GM18951 (cell line): ENCODE measurements at regions of chr1 and their contacts with region 1.

Region 1: GRCh38 chr1:161749509-161750407 is at the start of gene DUSP12:
- POLR2A ChIP-seq: peak; percentile 85

Region 2: DNA sequence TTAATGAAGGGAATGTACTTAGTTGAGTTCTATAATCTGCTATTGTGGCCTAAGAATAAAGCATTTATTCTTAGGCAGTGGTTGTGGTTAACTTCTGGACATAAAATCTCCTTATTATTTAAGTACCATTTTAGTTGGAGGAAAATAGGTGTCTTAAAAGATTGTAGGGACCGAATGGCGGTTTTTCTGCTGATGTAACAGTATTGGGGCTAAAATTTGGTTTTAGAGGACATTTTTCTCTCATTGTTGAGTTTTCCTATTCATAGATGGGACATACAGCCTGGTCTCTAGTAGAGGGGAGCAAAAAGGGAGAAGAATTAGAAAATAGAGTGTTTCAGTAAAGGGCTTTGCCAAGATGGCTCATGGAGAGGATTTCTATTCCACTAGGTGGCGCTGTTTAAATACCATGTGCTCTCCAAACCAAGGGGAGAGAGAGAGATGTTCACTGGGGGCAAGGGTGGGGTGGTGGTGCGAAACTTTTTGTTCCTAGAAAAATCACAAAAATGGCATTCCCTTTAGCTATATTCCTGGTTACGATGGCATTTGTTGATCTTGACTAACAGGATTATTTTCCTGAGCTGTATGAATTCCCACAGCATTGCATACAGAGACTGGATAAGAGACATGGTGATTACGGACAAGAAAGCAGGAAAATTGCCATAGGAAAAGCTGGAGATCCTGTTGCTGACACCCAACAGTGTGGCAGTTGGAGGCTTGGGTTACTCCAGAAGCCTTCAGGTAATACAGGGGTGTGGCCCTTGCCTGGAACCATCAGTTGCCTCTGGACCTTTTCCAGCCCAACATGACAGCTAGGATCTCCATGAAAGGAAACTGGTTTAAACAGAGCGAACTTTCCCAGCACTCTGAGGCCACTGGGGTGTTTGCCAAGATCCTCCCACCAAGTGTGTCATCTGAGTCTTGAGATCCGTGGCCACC is 262.7 kb before region 1 on chr1:
- in situ Hi-C with region 1: loop called (anchors 10 kb)
- POLR2A ChIP-seq: no peak

Region 3: GRCh38 chr1:161631076-161631475 is 118.7 kb before region 1 on chr1 and contains the start of gene FCGR3B:
- in situ Hi-C with region 1: loop called (anchors 25 kb)
- POLR2A ChIP-seq: no peak